ENCODE measurements at regions of chr2 and their contacts with region 1.

Region 1: GRCh38 chr2:219160186-219161017 is at the start of gene NHEJ1:
- DNase-seq: peak; percentile 99
- H3K4me3 ChIP-seq: peak within 1 kb of the TSS; percentile 74 to 92 (median 82)
- H3K27ac ChIP-seq: peak within 1 kb of the TSS; percentile 93 to 97 (median 94)
- H3K4me1 ChIP-seq: peaks cover 9 to 15% (median 14%) of the 10 kb centered on the region in 4 donors
- H3K27me3 ChIP-seq: no peaks in the 10 kb centered on the region
- CTCF ChIP-seq: peak in 2 of 3 experiments; percentile 99
- EP300 ChIP-seq: no peak
- POLR2A ChIP-seq: peak; percentile 4
- total RNA-seq, gene NHEJ1: 15.1 to 24.4 (median 17.8) TPM

Region 2: GRCh38 chr2:219206442-219207253 is 46.2 kb after region 1 on chr2 and contains the start of gene ZFAND2B:
- intact Hi-C with region 1: loop called (anchors 5 kb)
- DNase-seq: peak; percentile 97
- H3K4me3 ChIP-seq: peak within 1 kb of the TSS; percentile 71 to 97 (median 78)
- H3K27ac ChIP-seq: peak within 1 kb of the TSS; percentile 90 to 99 (median 96)
- H3K4me1 ChIP-seq: peaks cover 17 to 24% (median 23%) of the 10 kb centered on the region in 4 donors
- H3K27me3 ChIP-seq: peaks cover 0 to 2% (median 0%) of the 10 kb centered on the region in 4 donors
- CTCF ChIP-seq: peak in 2 of 3 experiments; percentile 22 to 31
- EP300 ChIP-seq: no peak
- POLR2A ChIP-seq: peak; percentile 78
- total RNA-seq, gene ZFAND2B: 27.0 to 50.1 (median 36.9) TPM

Region 3: DNA sequence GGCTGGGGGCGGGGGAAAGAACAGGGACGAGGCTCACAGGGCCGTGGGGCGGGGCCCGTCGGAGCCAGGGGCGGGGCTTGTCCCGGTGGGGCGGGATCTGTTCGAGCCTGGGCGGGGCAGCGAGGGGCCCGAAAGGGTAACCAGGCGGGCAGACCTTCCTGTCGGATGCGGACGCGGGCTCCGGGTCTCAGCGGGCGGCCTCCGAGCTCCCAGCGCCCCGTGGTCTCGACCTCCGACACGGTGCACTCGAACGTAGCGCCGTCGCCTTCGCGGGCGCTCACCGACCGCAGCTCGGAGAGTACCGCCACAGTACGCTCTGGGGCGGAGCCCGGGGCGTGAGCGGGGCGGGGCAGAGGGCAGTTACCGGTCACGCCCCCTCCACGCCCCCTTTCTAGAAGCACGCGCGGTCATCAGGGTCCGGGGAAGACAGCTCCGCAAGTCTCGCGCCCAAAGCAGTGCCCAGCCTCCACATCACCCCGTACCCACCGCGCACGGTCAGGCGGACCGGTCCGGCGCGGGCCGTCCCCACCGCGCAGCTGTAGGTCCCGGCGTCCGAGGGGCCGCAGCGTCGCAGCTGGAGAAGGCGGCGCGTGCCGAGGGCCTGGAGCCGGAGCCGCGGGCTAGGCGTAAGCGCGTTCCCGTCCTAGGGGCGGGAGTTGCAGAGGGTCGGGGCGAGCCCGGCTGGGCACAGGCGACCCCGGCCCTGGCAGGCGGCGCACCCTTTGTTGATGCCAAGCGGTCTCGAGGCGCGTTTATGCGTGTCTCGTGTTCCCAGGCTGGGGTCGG is 392.2 kb after region 1 on chr2:
- intact Hi-C with region 1: no loop called
- DNase-seq: peak; percentile 97
- H3K4me3 ChIP-seq: peak overlapping the region; percentile 58 to 86 (median 62)
- H3K27ac ChIP-seq: peak overlapping the region; percentile 73 to 80 (median 76)
- H3K4me1 ChIP-seq: peaks cover 18 to 28% (median 26%) of the 10 kb centered on the region in 4 donors
- H3K27me3 ChIP-seq: peaks cover 0 to 9% (median 0%) of the 10 kb centered on the region in 4 donors
- CTCF ChIP-seq: no peak
- EP300 ChIP-seq: no peak
- POLR2A ChIP-seq: no peak